Esophagus muscularis mucosa (tissue), 4 donors: ENCODE measurements at regions of chr6 and their contacts with region 1.

Region 1: DNA sequence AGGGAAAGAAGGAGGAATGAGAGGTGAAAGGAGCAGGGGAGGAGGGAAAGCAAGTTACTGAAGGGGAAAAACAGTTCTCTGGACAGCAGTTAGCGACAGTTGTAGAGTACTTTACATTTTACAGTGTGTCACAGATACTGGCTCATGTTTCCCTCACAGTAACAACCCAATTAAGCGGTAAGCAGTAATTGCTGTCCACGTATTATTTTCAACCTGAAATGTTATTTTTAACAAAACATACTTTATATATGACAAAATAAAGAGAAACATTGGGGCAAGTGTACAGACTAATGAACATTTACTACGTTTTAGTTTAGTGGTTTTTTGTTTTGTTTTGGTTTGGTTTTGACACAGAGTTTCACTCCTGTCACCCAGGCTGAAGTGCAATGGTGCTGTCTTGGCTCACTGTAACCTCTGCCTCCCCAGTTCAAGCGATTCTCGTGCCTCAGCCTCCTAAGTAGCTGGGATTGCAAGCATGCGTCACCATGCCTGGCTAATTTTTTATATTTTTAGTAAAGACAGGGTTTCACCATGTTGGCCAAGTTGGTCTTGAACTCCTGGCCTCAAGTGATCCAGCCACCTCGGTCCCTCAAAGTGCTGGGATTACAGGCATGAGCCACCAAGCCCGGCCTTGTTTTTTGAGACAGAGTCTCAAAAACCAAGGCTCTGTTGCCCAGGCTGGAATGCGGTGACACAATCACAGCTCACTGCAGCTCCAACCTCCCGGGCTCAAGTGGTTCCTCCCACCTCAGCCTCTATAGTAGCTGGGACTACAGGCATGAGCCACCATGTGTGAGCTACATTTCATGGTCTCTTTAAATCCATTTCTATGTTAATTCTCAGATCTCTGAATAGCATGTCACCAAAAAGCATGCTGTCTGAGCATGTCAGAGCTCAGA is 22.6 kb upstream of the BTN3A2 start:
- DNase-seq: no peak
- H3K4me3 ChIP-seq: peak overlapping the region in 2 of 4 donors; percentile 3 to 18
- H3K27ac ChIP-seq: no peak overlapping the region
- H3K4me1 ChIP-seq: peaks cover 0 to 8% (median 5%) of the 10 kb centered on the region in 4 donors
- H3K27me3 ChIP-seq: peaks cover 0 to 30% (median 3%) of the 10 kb centered on the region in 4 donors
- CTCF ChIP-seq: no peak
- EP300 ChIP-seq: no peak
- POLR2A ChIP-seq: no peak

Region 2: GRCh38 chr6:26568601-26569432 is 226.5 kb after region 1 on chr6:
- intact Hi-C with region 1: loop called (anchors 5 kb)
- DNase-seq: peak; percentile 100
- H3K4me3 ChIP-seq: peak overlapping the region; percentile 52 to 62 (median 58)
- H3K27ac ChIP-seq: peak overlapping the region; percentile 46 to 74 (median 62)
- H3K4me1 ChIP-seq: peaks cover 6 to 22% (median 20%) of the 10 kb centered on the region in 4 donors
- H3K27me3 ChIP-seq: no peaks in the 10 kb centered on the region
- CTCF ChIP-seq: peak; percentile 8 to 30 (median 12)
- EP300 ChIP-seq: no peak
- POLR2A ChIP-seq: no peak